ENCODE measurements at regions of chr7 and their contacts with region 1.

Region 1: GRCh38 chr7:26200444-26201246 is at the start of gene HNRNPA2B1:
- DNase-seq: peak; percentile 97
- ATAC-seq: peak; percentile 81
- H3K4me3 ChIP-seq: peak within 1 kb of the TSS; percentile 81
- H3K27ac ChIP-seq: peak within 1 kb of the TSS; percentile 100
- H3K4me1 ChIP-seq: 0 out of 2 replicates have a peak, but pooled peaks cover 2% of the 10 kb centered on the region
- H3K27me3 ChIP-seq: no peaks in the 10 kb centered on the region
- CTCF ChIP-seq: no peak
- POLR2A ChIP-seq: peak; percentile 100
- RAD21 ChIP-seq: no peak
- total RNA-seq, gene HNRNPA2B1: 49.3 and 118 TPM in 2 replicates

Region 2: GRCh38 chr7:26090927-26091519 is 109.6 kb before region 1 on chr7:
- CTCF ChIA-PET with region 1: interaction called, 12 read pairs
- POLR2A ChIA-PET with region 1: no interaction called
- dilution Hi-C with region 1: no loop called
- in situ Hi-C with region 1: no loop called
- intact Hi-C with region 1: loop called (anchors 1 kb)
- DNase-seq: peak; percentile 74
- ATAC-seq: peak; percentile 89
- H3K4me3 ChIP-seq: no peak overlapping the region
- H3K27ac ChIP-seq: no peak overlapping the region
- H3K4me1 ChIP-seq: no peaks in the 10 kb centered on the region
- H3K27me3 ChIP-seq: peaks cover 11% of the 10 kb centered on the region
- CTCF ChIP-seq: peak; percentile 76
- POLR2A ChIP-seq: no peak
- RAD21 ChIP-seq: peak; percentile 80

Region 3: GRCh38 chr7:26321435-26321834 is 120.8 kb after region 1 on chr7:
- CTCF ChIA-PET with region 1: no interaction called
- POLR2A ChIA-PET with region 1: no interaction called
- dilution Hi-C with region 1: no loop called
- in situ Hi-C with region 1: no loop called
- intact Hi-C with region 1: no loop called
- DNase-seq: no peak
- ATAC-seq: no peak
- H3K4me3 ChIP-seq: no peak overlapping the region
- H3K27ac ChIP-seq: no peak overlapping the region
- H3K4me1 ChIP-seq: no peaks in the 10 kb centered on the region
- H3K27me3 ChIP-seq: no peaks in the 10 kb centered on the region
- CTCF ChIP-seq: no peak
- POLR2A ChIP-seq: no peak
- RAD21 ChIP-seq: no peak

Region 4: GRCh38 chr7:26365077-26365900 is 164.6 kb after region 1 on chr7:
- CTCF ChIA-PET with region 1: no interaction called
- POLR2A ChIA-PET with region 1: no interaction called
- dilution Hi-C with region 1: no loop called
- in situ Hi-C with region 1: no loop called
- intact Hi-C with region 1: loop called (anchors 5 kb)
- DNase-seq: peak; percentile 77
- ATAC-seq: peak; percentile 92
- H3K4me3 ChIP-seq: no peak overlapping the region
- H3K27ac ChIP-seq: no peak overlapping the region
- H3K4me1 ChIP-seq: no peaks in the 10 kb centered on the region
- H3K27me3 ChIP-seq: peaks cover 16% of the 10 kb centered on the region
- CTCF ChIP-seq: peak; percentile 93
- POLR2A ChIP-seq: no peak
- RAD21 ChIP-seq: peak; percentile 98

Region 5: GRCh38 chr7:27110186-27111031 is 909.8 kb after region 1 on chr7:
- CTCF ChIA-PET with region 1: no interaction called
- POLR2A ChIA-PET with region 1: no interaction called
- dilution Hi-C with region 1: no loop called
- in situ Hi-C with region 1: loop called (anchors 10 kb)
- intact Hi-C with region 1: no loop called
- DNase-seq: peak; percentile 92
- ATAC-seq: peak; percentile 13
- H3K4me3 ChIP-seq: peak overlapping the region; percentile 13; the same call in 1 of the 2 replicates
- H3K27ac ChIP-seq: peak overlapping the region; percentile 98
- H3K4me1 ChIP-seq: peaks cover 32% of the 10 kb centered on the region
- H3K27me3 ChIP-seq: no peaks in the 10 kb centered on the region
- CTCF ChIP-seq: no peak
- POLR2A ChIP-seq: no peak
- RAD21 ChIP-seq: no peak

Region 6: DNA sequence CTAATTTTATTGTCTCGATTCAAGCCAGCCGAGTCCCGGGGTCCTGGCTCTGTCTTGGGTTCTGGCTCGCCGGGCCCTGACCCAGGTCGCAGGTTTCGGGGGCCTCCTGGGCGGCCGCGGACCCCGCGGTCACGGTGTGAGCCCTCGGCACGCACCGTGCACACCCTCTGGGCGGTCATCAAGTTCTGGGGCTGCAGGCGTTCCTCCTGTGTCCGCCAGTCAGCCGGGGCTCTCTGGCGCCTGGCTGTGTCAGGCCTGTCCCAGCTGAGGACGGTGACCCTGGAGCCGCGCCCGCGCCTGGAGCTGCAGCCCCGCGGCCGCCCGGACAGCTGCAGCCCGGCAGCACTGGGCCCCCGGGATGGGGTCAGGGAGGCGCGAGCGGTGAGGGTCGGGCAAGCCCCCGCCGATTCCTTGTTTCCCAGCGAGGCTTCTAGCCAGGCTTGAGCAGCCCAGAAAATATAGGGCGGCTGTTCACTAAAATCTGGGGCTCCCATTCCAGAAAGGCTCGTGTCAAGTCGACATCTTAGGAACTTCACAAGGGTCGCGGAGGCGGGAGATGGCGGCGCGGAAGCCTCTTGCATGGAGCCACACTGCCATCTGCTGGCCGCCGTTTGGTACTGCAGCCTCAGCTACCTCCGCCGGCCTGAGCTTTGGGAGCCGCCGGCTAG is 960.0 kb after region 1 on chr7:
- CTCF ChIA-PET with region 1: no interaction called
- POLR2A ChIA-PET with region 1: no interaction called
- dilution Hi-C with region 1: no loop called
- in situ Hi-C with region 1: no loop called
- intact Hi-C with region 1: loop called (anchors 5 kb)
- DNase-seq: peak; percentile 77
- ATAC-seq: peak; percentile 89
- H3K4me3 ChIP-seq: peak overlapping the region; percentile 55
- H3K27ac ChIP-seq: no peak overlapping the region
- H3K4me1 ChIP-seq: peaks cover 1% of the 10 kb centered on the region; the same call in 1 of the 2 replicates
- H3K27me3 ChIP-seq: peaks cover 28% of the 10 kb centered on the region
- CTCF ChIP-seq: peak; percentile 95
- POLR2A ChIP-seq: no peak
- RAD21 ChIP-seq: peak; percentile 96

Measured in IMR-90 (cell line).